Right cardiac atrium (tissue), 5 donors: ENCODE measurements at regions of chr5 and their contacts with region 1.

Region 1: GRCh38 chr5:77066823-77067442 is 20.2 kb downstream of the ZBED3 start:
- DNase-seq: peak in 2 of 3 donors; percentile 37 to 47
- ATAC-seq: peak; percentile 61 to 68
- H3K4me3 ChIP-seq: no peak overlapping the region
- H3K27ac ChIP-seq: no peak overlapping the region
- H3K4me1 ChIP-seq: no peaks in the 10 kb centered on the region
- H3K27me3 ChIP-seq: no peaks in the 10 kb centered on the region

Region 2: DNA sequence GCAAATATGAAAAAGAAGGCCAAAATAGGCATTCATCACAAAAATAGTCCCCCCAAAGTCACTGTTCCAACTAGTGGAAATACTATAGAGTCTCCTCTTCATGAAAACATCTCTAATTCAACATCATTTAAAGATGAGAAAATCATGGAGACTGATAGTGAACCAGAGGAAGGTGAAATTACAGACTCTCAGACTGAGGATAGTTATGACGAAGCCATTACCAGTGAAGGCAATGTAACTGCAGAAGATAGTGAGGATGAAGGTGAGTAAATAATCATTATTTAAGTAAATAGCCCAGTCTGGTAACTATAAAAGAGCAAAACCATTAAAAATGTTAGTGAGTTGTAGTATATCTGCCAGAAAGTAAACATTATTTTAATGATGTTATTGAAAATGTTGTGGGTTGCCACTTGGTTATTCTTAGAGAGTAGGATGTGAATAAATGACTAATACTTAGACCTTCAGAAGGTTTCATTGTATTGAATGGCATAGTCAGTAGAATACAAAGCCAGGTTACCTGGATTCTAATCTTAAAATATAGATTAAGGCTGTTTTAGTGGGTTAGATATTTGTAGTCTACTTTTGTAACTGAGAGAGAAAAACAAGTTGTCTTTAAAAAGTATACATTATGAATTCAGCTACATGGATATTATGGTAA is 20.4 kb before region 1 on chr5:
- intact Hi-C with region 1: loop called in 1 of 4 experiments (anchors 2 kb)
- DNase-seq: no peak
- ATAC-seq: no peak
- H3K4me3 ChIP-seq: no peak overlapping the region
- H3K27ac ChIP-seq: no peak overlapping the region
- H3K4me1 ChIP-seq: no peaks in the 10 kb centered on the region
- H3K27me3 ChIP-seq: no peaks in the 10 kb centered on the region

Region 3: GRCh38 chr5:77266291-77266690 is 199.4 kb after region 1 on chr5:
- intact Hi-C with region 1: no loop called
- DNase-seq: no peak
- ATAC-seq: no peak
- H3K4me3 ChIP-seq: no peak overlapping the region
- H3K27ac ChIP-seq: no peak overlapping the region
- H3K4me1 ChIP-seq: peaks cover 2% of the 10 kb centered on the region
- H3K27me3 ChIP-seq: no peaks in the 10 kb centered on the region